HepG2 (cell line): ENCODE measurements at regions of chr14 and their contacts with region 1.

Region 1: DNA sequence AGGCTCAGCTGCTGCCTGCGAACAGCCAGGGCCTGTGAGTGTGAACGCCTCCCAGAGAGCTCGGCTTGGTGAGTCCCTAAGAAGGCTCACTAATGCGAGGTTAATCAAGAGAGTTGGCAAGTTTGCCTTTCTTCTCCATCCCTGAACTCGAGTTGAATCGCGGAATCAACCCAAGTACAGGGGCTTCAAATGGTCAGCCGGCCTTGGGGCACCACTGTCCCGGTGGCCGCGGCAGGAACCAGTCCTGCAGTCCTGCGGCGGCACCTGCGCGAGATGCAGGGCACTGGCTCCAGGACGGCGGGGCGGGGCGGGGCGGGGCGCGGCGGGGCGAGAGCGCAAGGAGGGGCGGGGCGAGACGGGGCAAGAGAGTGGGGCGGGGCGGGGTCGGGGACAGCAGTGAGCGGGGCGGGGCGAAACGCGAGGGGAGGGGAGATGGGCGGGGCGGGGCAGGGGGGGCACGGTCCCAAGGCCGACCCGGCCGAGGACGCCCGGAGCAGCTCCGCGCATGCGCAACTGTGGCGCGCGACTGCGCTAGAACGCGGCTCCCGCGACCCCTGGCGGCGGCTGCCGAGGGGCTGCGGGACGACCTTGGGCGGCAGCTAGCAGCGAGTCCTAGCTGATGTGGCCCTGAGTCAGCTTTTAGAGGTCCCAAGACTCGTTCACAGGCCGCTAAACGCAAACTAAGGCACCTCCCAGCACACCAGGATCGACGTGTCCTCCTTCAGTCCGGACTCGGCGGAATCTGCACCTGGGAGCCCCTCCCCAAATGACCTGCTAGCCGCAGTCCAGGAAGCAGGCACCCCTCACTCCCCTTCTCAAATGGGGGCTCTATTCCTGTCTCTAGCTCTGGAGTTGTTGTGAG is 58.0 kb downstream of the TTC7B start:
- DNase-seq: peak; percentile 79
- ATAC-seq: peak; percentile 95
- H3K4me3 ChIP-seq: peak overlapping the region; percentile 53 to 85 (median 63); a peak in 5 of 6 replicates
- H3K27ac ChIP-seq: peak overlapping the region; percentile 59
- H3K4me1 ChIP-seq: peaks cover 15% of the 10 kb centered on the region
- H3K27me3 ChIP-seq: no peaks in the 10 kb centered on the region
- CTCF ChIP-seq: peak; percentile 92
- EP300 ChIP-seq: no peak
- POLR2A ChIP-seq: peak; percentile 57 to 64
- RAD21 ChIP-seq: peak; percentile 78

Region 2: DNA sequence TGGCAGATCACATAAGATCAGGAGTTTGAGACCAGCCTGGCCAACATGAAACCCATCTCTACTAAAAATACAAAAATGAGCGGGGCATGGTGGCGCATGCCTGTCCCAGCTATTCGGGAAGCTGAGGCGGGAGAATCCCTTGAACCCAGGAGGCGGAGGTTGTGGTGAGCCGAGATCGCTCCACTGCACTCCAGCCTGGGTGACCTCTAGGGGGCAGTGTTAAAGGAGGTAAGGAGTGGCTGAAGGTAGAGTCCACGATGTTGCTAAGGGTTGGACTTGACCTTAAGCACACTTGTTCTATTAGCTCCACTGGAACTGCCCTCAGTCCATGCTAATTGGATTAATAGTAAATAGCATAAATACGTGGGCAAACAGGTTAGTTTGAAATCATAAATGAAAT is 564.3 kb before region 1 on chr14:
- CTCF ChIA-PET with region 1: no interaction called
- POLR2A ChIA-PET with region 1: no interaction called
- in situ Hi-C with region 1: no loop called
- intact Hi-C with region 1: loop called (anchors 10 kb)
- DNase-seq: peak; percentile 4
- ATAC-seq: peak; percentile 46; the same call in 1 of the 3 replicates
- H3K4me3 ChIP-seq: no peak overlapping the region
- H3K27ac ChIP-seq: no peak overlapping the region
- H3K4me1 ChIP-seq: no peaks in the 10 kb centered on the region
- H3K27me3 ChIP-seq: peaks cover 2 to 9% of the 10 kb centered on the region in 2 experiments; a peak in 3 of 5 replicates
- CTCF ChIP-seq: peak; percentile 50
- EP300 ChIP-seq: no peak
- POLR2A ChIP-seq: no peak
- RAD21 ChIP-seq: no peak

Region 3: GRCh38 chr14:90545966-90546751 is 212.1 kb before region 1 on chr14:
- CTCF ChIA-PET with region 1: no interaction called
- POLR2A ChIA-PET with region 1: no interaction called
- in situ Hi-C with region 1: no loop called
- intact Hi-C with region 1: no loop called
- DNase-seq: no peak
- ATAC-seq: peak; percentile 20; the same call in 1 of the 3 replicates
- H3K4me3 ChIP-seq: no peak overlapping the region
- H3K27ac ChIP-seq: no peak overlapping the region
- H3K4me1 ChIP-seq: no peaks in the 10 kb centered on the region
- H3K27me3 ChIP-seq: peaks cover 0 to 3% of the 10 kb centered on the region in 2 experiments; a peak in 2 of 5 replicates
- CTCF ChIP-seq: no peak
- EP300 ChIP-seq: no peak
- POLR2A ChIP-seq: no peak
- RAD21 ChIP-seq: no peak